ENCODE measurements at regions of chr2 and their contacts with region 1.

Region 1: DNA sequence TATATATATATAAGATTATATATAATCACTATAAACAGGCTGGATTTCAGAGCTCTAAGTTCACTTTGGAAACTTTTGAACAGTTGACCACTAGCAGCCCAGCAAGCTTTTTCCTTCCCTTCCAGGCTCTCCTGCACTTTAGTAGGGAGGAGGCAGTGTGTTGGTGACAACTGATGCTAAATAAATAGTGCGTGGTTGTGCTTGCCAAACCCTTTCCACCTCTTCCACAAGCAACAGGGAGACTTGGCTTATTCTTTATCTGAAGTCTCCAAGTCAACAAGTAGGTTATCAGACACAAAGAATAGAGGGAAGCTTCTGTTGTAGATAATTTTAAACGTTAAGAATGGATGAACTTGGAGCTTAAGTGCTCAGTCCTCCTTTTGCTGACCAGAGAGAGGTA is 408.2 kb upstream of the HNRNPA3 start:
- DNase-seq: no peak
- H3K4me3 ChIP-seq: no peak overlapping the region
- H3K27ac ChIP-seq: no peak overlapping the region
- H3K27me3 ChIP-seq: no peaks in the 10 kb centered on the region
- CTCF ChIP-seq: no peak

Region 2: GRCh38 chr2:176814306-176815052 is 10.1 kb after region 1 on chr2:
- CTCF ChIA-PET with region 1: interaction called, 17 read pairs
- POLR2A ChIA-PET with region 1: no interaction called
- DNase-seq: no peak
- H3K4me3 ChIP-seq: no peak overlapping the region
- H3K27ac ChIP-seq: no peak overlapping the region
- H3K27me3 ChIP-seq: no peaks in the 10 kb centered on the region
- CTCF ChIP-seq: peak; percentile 52

Region 3: GRCh38 chr2:176978921-176979320 is 174.5 kb after region 1 on chr2:
- CTCF ChIA-PET with region 1: no interaction called
- POLR2A ChIA-PET with region 1: no interaction called
- DNase-seq: no peak
- H3K4me3 ChIP-seq: no peak overlapping the region
- H3K27ac ChIP-seq: no peak overlapping the region
- H3K27me3 ChIP-seq: peaks cover 2% of the 10 kb centered on the region
- CTCF ChIP-seq: no peak

Measured in AG04450 (cell line).